Naive thymus-derived CD4-positive, alpha-beta T cell (primary cell): ENCODE measurements at regions of chr19 and their contacts with region 1.

Region 1: GRCh38 chr19:37370880-37371661 is at the start of gene ZNF527:
- DNase-seq: peak; percentile 92 to 97 (median 96)
- ATAC-seq: peak; percentile 96
- H3K4me3 ChIP-seq: peak within 1 kb of the TSS; percentile 85
- H3K4me3 Mint-ChIP-seq: peak within 1 kb of the TSS; percentile 92 to 100 (median 98)
- H3K27ac ChIP-seq: peak within 1 kb of the TSS; percentile 74
- H3K27ac Mint-ChIP-seq: peak within 1 kb of the TSS; percentile 87 to 99 (median 97)
- H3K4me1 ChIP-seq: peaks cover 0 to 8% of the 10 kb centered on the region in 2 donors
- H3K4me1 Mint-ChIP-seq: peaks cover 7 to 25% (median 17%) of the 10 kb centered on the region in 7 donors
- H3K27me3 ChIP-seq: no peaks in the 10 kb centered on the region
- H3K27me3 Mint-ChIP-seq: no peaks in the 10 kb centered on the region
- total RNA-seq, gene ZNF527: 5.6 to 13.6 (median 13.2) TPM

Region 2: GRCh38 chr19:35828692-35829301 is 1542.3 kb before region 1 on chr19:
- CTCF ChIA-PET with region 1: no interaction called
- POLR2A ChIA-PET with region 1: no interaction called
- intact Hi-C with region 1: no loop called
- DNase-seq: peak in 7 of 9 donors; percentile 26 to 66 (median 40)
- ATAC-seq: peak; percentile 60
- H3K4me3 ChIP-seq: no peak overlapping the region
- H3K4me3 Mint-ChIP-seq: no peak overlapping the region
- H3K27ac ChIP-seq: no peak overlapping the region
- H3K27ac Mint-ChIP-seq: no peak overlapping the region
- H3K4me1 ChIP-seq: no peaks in the 10 kb centered on the region
- H3K4me1 Mint-ChIP-seq: peaks cover 0 to 2% (median 0%) of the 10 kb centered on the region in 7 donors
- H3K27me3 ChIP-seq: no peaks in the 10 kb centered on the region
- H3K27me3 Mint-ChIP-seq: peaks cover 10 to 36% (median 36%) of the 10 kb centered on the region in 5 donors

Region 3: DNA sequence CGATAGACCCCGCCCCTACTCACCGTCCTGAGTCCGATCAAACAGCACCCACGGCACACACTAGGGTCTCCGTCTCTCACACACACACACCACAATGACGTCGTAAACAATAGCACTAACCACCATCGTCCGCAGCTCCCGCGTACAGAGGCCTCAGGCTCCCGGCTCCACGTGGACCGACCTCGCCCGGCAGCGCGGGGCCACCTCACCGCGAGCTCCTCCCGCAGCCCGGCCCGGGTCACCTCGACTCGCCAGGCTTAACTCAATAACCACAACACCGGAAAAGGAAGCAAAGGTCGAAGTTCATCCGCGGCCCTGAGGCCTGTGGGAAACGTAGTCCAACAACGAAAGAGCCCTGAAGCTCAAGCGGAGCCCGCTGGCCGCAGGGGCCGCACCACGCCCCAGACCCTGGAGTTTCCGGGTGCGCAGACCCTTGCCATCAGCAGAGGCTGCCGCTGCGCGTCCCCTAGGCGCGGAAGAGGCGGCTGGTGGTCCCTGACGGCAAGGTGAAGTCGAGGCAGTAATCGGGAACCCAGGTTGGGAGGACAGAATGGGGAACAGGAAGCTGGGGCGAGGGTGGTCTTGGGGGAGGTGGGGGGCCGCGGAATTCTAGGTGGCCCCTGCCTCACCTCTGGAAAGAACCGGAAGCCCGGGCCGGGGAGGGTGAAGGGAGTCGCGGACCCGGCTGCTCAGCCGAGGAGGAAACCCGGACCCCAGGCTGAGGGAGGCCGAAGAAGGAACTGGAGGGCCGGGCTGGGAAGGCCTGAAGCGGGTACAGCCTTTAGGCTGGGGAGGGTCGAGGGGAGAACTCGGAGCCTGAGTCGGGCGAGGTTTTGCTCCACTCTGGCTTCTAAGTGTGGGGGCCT is 797.8 kb before region 1 on chr19 and contains the start of gene ZNF529:
- CTCF ChIA-PET with region 1: no interaction called
- POLR2A ChIA-PET with region 1: no interaction called
- intact Hi-C with region 1: loop called in 1 of 2 experiments (anchors 1 kb)
- DNase-seq: peak; percentile 67 to 95 (median 85)
- ATAC-seq: peak; percentile 95
- H3K4me3 ChIP-seq: peak within 1 kb of the TSS; percentile 95
- H3K4me3 Mint-ChIP-seq: peak within 1 kb of the TSS; percentile 80 to 100 (median 93)
- H3K27ac ChIP-seq: peak within 1 kb of the TSS; percentile 98
- H3K27ac Mint-ChIP-seq: peak within 1 kb of the TSS; percentile 94 to 100 (median 98)
- H3K4me1 ChIP-seq: peaks cover 0 to 15% of the 10 kb centered on the region in 2 donors
- H3K4me1 Mint-ChIP-seq: peaks cover 23 to 46% (median 40%) of the 10 kb centered on the region in 7 donors
- H3K27me3 ChIP-seq: no peaks in the 10 kb centered on the region
- H3K27me3 Mint-ChIP-seq: no peaks in the 10 kb centered on the region
- total RNA-seq, gene ZNF529: 22.6 to 37.8 (median 33.8) TPM

Region 4: DNA sequence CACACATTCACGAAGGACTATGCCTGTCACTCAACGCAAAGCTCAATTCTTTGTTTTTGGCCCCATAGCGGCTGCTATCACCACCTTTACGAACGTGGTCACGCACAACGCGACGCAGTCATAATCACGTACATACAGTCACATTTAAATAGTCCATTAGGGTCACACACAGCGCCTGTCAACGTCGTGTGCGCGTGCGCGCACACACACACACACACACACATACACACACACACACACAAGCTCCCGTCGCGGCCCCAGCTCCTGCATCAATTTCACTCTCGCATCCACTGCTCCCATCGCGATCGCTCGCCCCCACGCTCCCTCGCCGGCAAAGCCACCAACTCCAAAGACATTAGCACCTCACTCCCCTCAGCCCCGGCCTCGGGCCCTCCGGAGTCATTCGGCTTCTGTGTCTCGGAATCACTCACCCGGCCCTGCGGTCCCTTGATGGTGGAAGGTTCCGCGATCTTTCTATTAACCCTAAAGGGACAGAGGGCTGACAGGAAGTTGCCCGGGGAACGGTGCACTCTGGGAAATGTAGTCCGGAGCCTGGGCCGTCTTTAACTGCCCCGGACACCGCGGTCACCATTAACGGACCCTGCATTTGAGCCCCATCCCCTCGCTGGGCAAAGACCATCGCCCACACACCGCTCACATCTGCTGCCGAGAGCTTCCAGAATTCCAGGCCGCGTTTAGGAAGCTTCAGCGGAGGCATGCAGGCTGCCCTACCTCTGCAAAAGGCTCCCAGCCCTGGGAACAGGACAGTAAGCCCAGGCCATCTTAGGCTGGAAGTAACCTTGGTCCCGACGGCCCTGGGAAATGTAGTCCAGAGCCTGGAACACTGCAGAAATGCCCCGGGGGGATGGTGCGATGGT is 532.9 kb before region 1 on chr19 and contains the start of gene ZNF790:
- CTCF ChIA-PET with region 1: no interaction called
- POLR2A ChIA-PET with region 1: interaction called, 3 read pairs
- intact Hi-C with region 1: loop called in 1 of 2 experiments (anchors 1 kb)
- DNase-seq: peak; percentile 68 to 91 (median 85)
- ATAC-seq: peak; percentile 95
- H3K4me3 ChIP-seq: peak within 1 kb of the TSS; percentile 92
- H3K4me3 Mint-ChIP-seq: peak within 1 kb of the TSS in 1 of 10 donors; percentile 22
- H3K27ac ChIP-seq: peak within 1 kb of the TSS; percentile 92
- H3K27ac Mint-ChIP-seq: peak within 1 kb of the TSS in 5 of 9 donors; percentile 39 to 65 (median 51)
- H3K4me1 ChIP-seq: peaks cover 6 to 11% of the 10 kb centered on the region in 2 donors
- H3K4me1 Mint-ChIP-seq: peaks cover 0 to 21% (median 14%) of the 10 kb centered on the region in 7 donors
- H3K27me3 ChIP-seq: no peaks in the 10 kb centered on the region
- H3K27me3 Mint-ChIP-seq: no peaks in the 10 kb centered on the region
- total RNA-seq, gene ZNF790: 2.6 to 14.4 (median 7.3) TPM

Region 5: GRCh38 chr19:36962346-36962745 is 408.7 kb before region 1 on chr19:
- CTCF ChIA-PET with region 1: no interaction called
- POLR2A ChIA-PET with region 1: no interaction called
- intact Hi-C with region 1: no loop called
- DNase-seq: no peak
- ATAC-seq: no peak
- H3K4me3 ChIP-seq: no peak overlapping the region
- H3K4me3 Mint-ChIP-seq: no peak overlapping the region
- H3K27ac ChIP-seq: no peak overlapping the region
- H3K27ac Mint-ChIP-seq: no peak overlapping the region
- H3K4me1 ChIP-seq: no peaks in the 10 kb centered on the region
- H3K4me1 Mint-ChIP-seq: no peaks in the 10 kb centered on the region
- H3K27me3 ChIP-seq: no peaks in the 10 kb centered on the region
- H3K27me3 Mint-ChIP-seq: no peaks in the 10 kb centered on the region

Region 6: GRCh38 chr19:36973021-36973843 is 397.8 kb before region 1 on chr19:
- CTCF ChIA-PET with region 1: no interaction called
- POLR2A ChIA-PET with region 1: no interaction called
- intact Hi-C with region 1: loop called in 1 of 2 experiments (anchors 1 kb)
- DNase-seq: peak; percentile 56 to 84 (median 73)
- ATAC-seq: peak; percentile 96
- H3K4me3 ChIP-seq: peak overlapping the region; percentile 100
- H3K4me3 Mint-ChIP-seq: peak overlapping the region; percentile 92 to 99 (median 97)
- H3K27ac ChIP-seq: peak overlapping the region; percentile 75
- H3K27ac Mint-ChIP-seq: peak overlapping the region; percentile 83 to 97 (median 92)
- H3K4me1 ChIP-seq: peaks cover 5 to 15% of the 10 kb centered on the region in 2 donors
- H3K4me1 Mint-ChIP-seq: peaks cover 9 to 22% (median 13%) of the 10 kb centered on the region in 7 donors
- H3K27me3 ChIP-seq: no peaks in the 10 kb centered on the region
- H3K27me3 Mint-ChIP-seq: no peaks in the 10 kb centered on the region

Region 7: DNA sequence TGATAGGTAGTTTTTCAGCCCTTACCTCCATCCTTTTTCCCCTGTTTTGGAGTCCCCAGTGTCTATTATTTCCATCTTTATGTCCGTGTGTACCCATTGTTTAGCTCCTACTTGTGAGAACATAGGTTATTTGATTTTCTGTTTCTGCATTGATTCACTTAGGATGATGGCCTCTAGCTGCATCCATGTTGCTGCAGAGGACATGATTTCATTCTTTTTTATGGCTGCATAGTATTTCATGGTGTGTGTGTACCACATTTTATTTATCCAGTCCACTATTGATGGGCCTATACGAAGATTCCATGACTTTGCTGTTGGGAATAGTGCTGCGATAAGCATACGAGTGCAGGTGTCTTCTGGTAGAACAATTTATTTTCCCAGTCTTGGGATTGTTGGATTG is 15.2 kb before region 1 on chr19:
- CTCF ChIA-PET with region 1: no interaction called
- POLR2A ChIA-PET with region 1: no interaction called
- intact Hi-C with region 1: no loop called
- DNase-seq: no peak
- ATAC-seq: no peak
- H3K4me3 ChIP-seq: no peak overlapping the region
- H3K4me3 Mint-ChIP-seq: no peak overlapping the region
- H3K27ac ChIP-seq: no peak overlapping the region
- H3K27ac Mint-ChIP-seq: no peak overlapping the region
- H3K4me1 ChIP-seq: no peaks in the 10 kb centered on the region
- H3K4me1 Mint-ChIP-seq: peaks cover 0 to 7% (median 4%) of the 10 kb centered on the region in 7 donors
- H3K27me3 ChIP-seq: no peaks in the 10 kb centered on the region
- H3K27me3 Mint-ChIP-seq: no peaks in the 10 kb centered on the region

Region 8: GRCh38 chr19:37506387-37507166 is 135.5 kb after region 1 on chr19 and contains the start of gene ZNF793:
- CTCF ChIA-PET with region 1: no interaction called
- POLR2A ChIA-PET with region 1: interaction called, 8 read pairs
- intact Hi-C with region 1: loop called in 1 of 2 experiments (anchors 1 kb)
- DNase-seq: peak; percentile 33 to 88 (median 83)
- ATAC-seq: peak; percentile 90
- H3K4me3 ChIP-seq: peak within 1 kb of the TSS; percentile 83
- H3K4me3 Mint-ChIP-seq: no peak within 1 kb of the TSS
- H3K27ac ChIP-seq: peak within 1 kb of the TSS; percentile 90
- H3K27ac Mint-ChIP-seq: no peak within 1 kb of the TSS
- H3K4me1 ChIP-seq: peaks cover 0 to 14% of the 10 kb centered on the region in 2 donors
- H3K4me1 Mint-ChIP-seq: peaks cover 0 to 2% (median 0%) of the 10 kb centered on the region in 7 donors
- H3K27me3 ChIP-seq: no peaks in the 10 kb centered on the region
- H3K27me3 Mint-ChIP-seq: peaks cover 0 to 5% (median 0%) of the 10 kb centered on the region in 5 donors
- total RNA-seq, gene ZNF793: 1.1 to 11.7 (median 6.0) TPM

Region 9: DNA sequence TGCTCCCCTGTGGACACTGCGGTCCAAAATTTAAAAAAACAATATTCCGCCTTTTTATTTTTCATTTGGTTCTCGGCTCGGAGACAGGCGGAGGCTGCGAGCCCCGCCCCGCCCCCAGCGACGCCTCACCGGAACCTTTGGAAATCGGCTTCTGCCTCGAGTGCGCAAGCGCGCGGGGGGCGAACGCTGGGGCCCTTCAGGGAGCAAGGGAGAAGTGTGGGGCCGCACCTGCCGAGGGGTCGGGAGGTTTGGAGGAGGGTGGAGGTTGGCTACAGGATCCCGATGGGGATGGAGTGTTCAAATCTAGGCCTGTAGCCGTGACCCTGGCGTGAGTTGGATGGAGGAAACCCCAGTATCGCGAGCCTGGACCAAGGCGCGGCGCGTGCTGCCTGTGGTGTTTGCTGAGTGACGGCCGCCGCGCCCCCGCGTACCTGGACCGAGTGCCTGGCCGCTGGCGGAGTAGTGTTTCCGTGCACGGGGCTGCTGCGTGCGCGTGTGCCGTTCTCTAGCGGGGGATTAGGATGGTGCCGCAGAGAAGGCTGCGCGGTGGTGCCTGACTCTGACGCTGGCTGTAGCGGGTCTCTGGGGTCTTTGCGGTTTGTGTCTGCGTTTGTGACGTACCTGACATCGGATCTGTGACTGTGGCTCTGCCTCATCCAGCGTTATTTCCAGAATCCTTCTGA is 284.8 kb after region 1 on chr19:
- CTCF ChIA-PET with region 1: no interaction called
- POLR2A ChIA-PET with region 1: no interaction called
- intact Hi-C with region 1: loop called (anchors 1 kb)
- DNase-seq: peak; percentile 74 to 90 (median 86)
- ATAC-seq: peak; percentile 86
- H3K4me3 ChIP-seq: peak overlapping the region; percentile 95
- H3K4me3 Mint-ChIP-seq: peak overlapping the region; percentile 82 to 99 (median 96)
- H3K27ac ChIP-seq: peak overlapping the region; percentile 89
- H3K27ac Mint-ChIP-seq: peak overlapping the region; percentile 81 to 99 (median 97)
- H3K4me1 ChIP-seq: peaks cover 8 to 16% of the 10 kb centered on the region in 2 donors
- H3K4me1 Mint-ChIP-seq: peaks cover 28 to 40% (median 33%) of the 10 kb centered on the region in 7 donors
- H3K27me3 ChIP-seq: no peaks in the 10 kb centered on the region
- H3K27me3 Mint-ChIP-seq: peaks cover 0 to 3% (median 0%) of the 10 kb centered on the region in 5 donors

Region 10: GRCh38 chr19:39187559-39187957 is 1816.5 kb after region 1 on chr19:
- CTCF ChIA-PET with region 1: no interaction called
- POLR2A ChIA-PET with region 1: no interaction called
- intact Hi-C with region 1: no loop called
- DNase-seq: no peak
- ATAC-seq: no peak
- H3K4me3 ChIP-seq: no peak overlapping the region
- H3K4me3 Mint-ChIP-seq: no peak overlapping the region
- H3K27ac ChIP-seq: no peak overlapping the region
- H3K27ac Mint-ChIP-seq: peak overlapping the region in 2 of 9 donors; percentile 7 to 42
- H3K4me1 ChIP-seq: no peaks in the 10 kb centered on the region
- H3K4me1 Mint-ChIP-seq: peaks cover 0 to 4% (median 0%) of the 10 kb centered on the region in 7 donors
- H3K27me3 ChIP-seq: no peaks in the 10 kb centered on the region
- H3K27me3 Mint-ChIP-seq: peaks cover 5 to 31% (median 10%) of the 10 kb centered on the region in 5 donors